Pancreas (tissue), 10 donors: ENCODE measurements at regions of chr4 and their contacts with region 1.

Region 1: DNA sequence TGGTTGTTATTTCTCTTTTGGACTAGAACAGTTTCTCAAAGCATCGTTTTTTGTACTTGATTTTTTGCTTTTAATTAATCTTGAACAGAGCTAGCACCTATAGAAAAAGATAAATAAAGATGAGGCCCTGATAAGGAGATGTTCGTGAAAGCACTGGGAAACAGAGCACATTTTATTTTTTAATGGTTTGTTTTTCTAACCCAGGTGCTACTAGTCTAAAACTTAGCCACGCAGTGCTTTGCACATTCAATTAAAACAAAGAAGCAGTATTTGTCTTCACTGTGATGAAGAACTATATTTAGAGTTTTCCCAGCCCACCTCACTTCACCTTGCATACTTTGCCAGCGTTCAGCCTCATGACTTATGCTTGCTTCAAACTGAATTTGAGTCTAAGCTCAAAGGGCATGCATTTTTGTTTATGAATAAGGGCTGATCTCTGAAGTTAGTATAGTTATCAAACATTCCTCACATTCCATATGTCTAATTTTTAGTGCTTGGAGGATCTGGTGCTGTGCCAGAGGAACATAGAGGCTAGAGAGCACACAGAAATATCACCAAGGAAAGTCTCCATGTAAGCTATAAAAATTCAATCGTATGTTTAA is 76.7 kb downstream of the WWC2 start:
- DNase-seq: no peak
- ATAC-seq: peak in 1 of 4 donors; percentile 6
- H3K4me3 ChIP-seq: no peak overlapping the region
- H3K27ac ChIP-seq: no peak overlapping the region
- H3K4me1 ChIP-seq: peaks cover 36 to 40% (median 38%) of the 10 kb centered on the region in 3 donors
- H3K27me3 ChIP-seq: no peaks in the 10 kb centered on the region
- CTCF ChIP-seq: no peak

Region 2: GRCh38 chr4:183118585-183118984 is 57.1 kb before region 1 on chr4:
- intact Hi-C with region 1: loop called in 1 of 3 experiments (anchors 10 kb)
- DNase-seq: no peak
- ATAC-seq: peak; percentile 63 to 92 (median 81)
- H3K4me3 ChIP-seq: no peak overlapping the region
- H3K27ac ChIP-seq: peak overlapping the region in 1 of 4 donors; percentile 5
- H3K4me1 ChIP-seq: peaks cover 5 to 22% (median 19%) of the 10 kb centered on the region in 3 donors
- H3K27me3 ChIP-seq: no peaks in the 10 kb centered on the region
- CTCF ChIP-seq: no peak